ENCODE measurements at regions of chr11 and their contacts with region 1.

Region 1: GRCh38 chr11:121655537-121656327 is 203.0 kb upstream of the SORL1-AS1 start:
- DNase-seq: peak; percentile 71 to 82 (median 81)
- ATAC-seq: peak; percentile 99
- H3K4me3 ChIP-seq: peak overlapping the region; percentile 11
- H3K27ac ChIP-seq: peak overlapping the region; percentile 32; the same call in 1 of the 3 replicates
- H3K4me1 ChIP-seq: peaks cover 0 to 8% of the 10 kb centered on the region in 2 experiments; a peak in 2 of 5 replicates
- H3K27me3 ChIP-seq: no peaks in the 10 kb centered on the region
- CTCF ChIP-seq: peak; percentile 70 to 91 (median 82)
- EP300 ChIP-seq: no peak
- POLR2A ChIP-seq: no peak
- RAD21 ChIP-seq: peak; percentile 75 to 78

Region 2: DNA sequence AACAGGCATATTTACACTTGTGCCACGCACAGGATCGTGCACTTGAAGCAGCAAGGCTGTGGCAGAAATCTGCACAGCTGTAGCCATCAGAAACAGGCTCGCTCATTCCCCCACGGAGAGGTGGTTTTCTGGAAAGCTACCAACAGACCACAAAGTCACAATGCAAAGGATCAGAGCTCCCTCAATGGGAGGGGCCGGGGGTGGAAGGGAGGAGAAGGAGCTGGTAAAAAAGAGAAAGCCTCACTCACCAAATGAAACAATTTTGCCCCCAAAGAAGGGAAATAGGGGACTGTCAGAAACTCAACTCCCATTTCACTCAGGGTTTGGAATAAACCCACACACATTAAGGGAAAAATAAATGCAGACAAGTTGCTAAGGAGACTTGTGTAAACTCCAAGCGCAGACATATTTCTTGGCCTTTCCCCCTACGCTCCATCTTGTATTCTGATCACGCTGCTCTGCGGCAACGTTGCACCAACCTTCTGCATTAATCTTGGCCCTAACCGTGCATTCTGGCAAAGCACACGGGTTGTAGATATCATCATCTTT is 503.5 kb after region 1 on chr11:
- CTCF ChIA-PET with region 1: no interaction called
- POLR2A ChIA-PET with region 1: no interaction called
- in situ Hi-C with region 1: no loop called
- intact Hi-C with region 1: no loop called
- DNase-seq: no peak
- ATAC-seq: no peak
- H3K4me3 ChIP-seq: no peak overlapping the region
- H3K27ac ChIP-seq: no peak overlapping the region
- H3K4me1 ChIP-seq: no peaks in the 10 kb centered on the region
- H3K27me3 ChIP-seq: no peaks in the 10 kb centered on the region
- CTCF ChIP-seq: no peak
- EP300 ChIP-seq: no peak
- POLR2A ChIP-seq: no peak
- RAD21 ChIP-seq: no peak

Region 3: DNA sequence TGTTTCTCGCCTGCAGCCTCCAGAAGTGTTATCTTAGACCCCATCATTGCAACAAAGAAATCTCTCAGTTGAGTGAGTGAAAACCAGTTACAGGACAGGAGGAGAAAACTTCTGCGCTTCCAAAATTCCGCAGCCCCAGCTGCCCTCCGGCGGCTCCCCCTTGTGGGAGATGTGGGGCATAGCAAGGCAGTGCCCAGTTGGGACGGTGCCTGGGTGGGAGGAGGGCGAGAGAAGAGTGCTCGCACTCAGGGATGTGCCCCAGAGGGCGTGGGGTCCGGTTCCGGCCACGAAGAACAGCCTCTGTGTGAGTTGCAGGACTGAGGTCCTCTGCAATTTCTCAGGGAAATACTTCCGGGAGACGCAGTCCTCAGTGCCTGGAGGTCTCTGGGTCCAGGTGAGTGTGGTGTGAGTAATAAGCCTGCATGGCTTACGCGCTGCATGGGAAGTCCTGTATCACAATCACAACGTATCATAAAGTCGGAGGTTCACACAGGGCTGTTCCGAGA is 547.3 kb after region 1 on chr11:
- CTCF ChIA-PET with region 1: no interaction called
- POLR2A ChIA-PET with region 1: no interaction called
- in situ Hi-C with region 1: no loop called
- intact Hi-C with region 1: loop called (anchors 1 kb)
- DNase-seq: peak; percentile 16 to 57 (median 52)
- ATAC-seq: peak; percentile 86
- H3K4me3 ChIP-seq: no peak overlapping the region
- H3K27ac ChIP-seq: no peak overlapping the region
- H3K4me1 ChIP-seq: no peaks in the 10 kb centered on the region
- H3K27me3 ChIP-seq: no peaks in the 10 kb centered on the region
- CTCF ChIP-seq: peak; percentile 52 to 68 (median 56)
- EP300 ChIP-seq: no peak
- POLR2A ChIP-seq: no peak
- RAD21 ChIP-seq: peak; percentile 27 to 51; a peak in 3 of 4 replicates

Region 4: GRCh38 chr11:122505304-122506006 is 849.7 kb after region 1 on chr11:
- CTCF ChIA-PET with region 1: no interaction called
- POLR2A ChIA-PET with region 1: no interaction called
- in situ Hi-C with region 1: loop called (anchors 10 kb)
- intact Hi-C with region 1: loop called (anchors 1 kb)
- DNase-seq: peak; percentile 43 to 57 (median 47)
- ATAC-seq: peak; percentile 91
- H3K4me3 ChIP-seq: no peak overlapping the region
- H3K27ac ChIP-seq: no peak overlapping the region
- H3K4me1 ChIP-seq: no peaks in the 10 kb centered on the region
- H3K27me3 ChIP-seq: no peaks in the 10 kb centered on the region
- CTCF ChIP-seq: peak; percentile 53 to 73 (median 62)
- EP300 ChIP-seq: no peak
- POLR2A ChIP-seq: no peak
- RAD21 ChIP-seq: peak; percentile 48 to 58

Measured in K562 (cell line).